CD4-positive, alpha-beta memory T cell (primary cell): ENCODE measurements at regions of chr12 and their contacts with region 1.

Region 1: GRCh38 chr12:93569656-93570551 is 2.6 kb upstream of the SOCS2 start:
- DNase-seq: peak; percentile 73 to 80 (median 74)
- H3K4me3 ChIP-seq: peak overlapping the region; percentile 71 to 78
- H3K4me3 Mint-ChIP-seq: peak overlapping the region; percentile 90 to 98 (median 92)
- H3K27ac ChIP-seq: peak overlapping the region; percentile 73
- H3K27ac Mint-ChIP-seq: peak overlapping the region; percentile 87 to 96 (median 92)
- H3K4me1 ChIP-seq: peaks cover 28% of the 10 kb centered on the region
- H3K4me1 Mint-ChIP-seq: peaks cover 16 to 41% (median 28%) of the 10 kb centered on the region in 4 donors
- H3K27me3 ChIP-seq: peaks cover 3% of the 10 kb centered on the region
- H3K27me3 Mint-ChIP-seq: peaks cover 1 to 2% of the 10 kb centered on the region in 2 donors

Region 2: DNA sequence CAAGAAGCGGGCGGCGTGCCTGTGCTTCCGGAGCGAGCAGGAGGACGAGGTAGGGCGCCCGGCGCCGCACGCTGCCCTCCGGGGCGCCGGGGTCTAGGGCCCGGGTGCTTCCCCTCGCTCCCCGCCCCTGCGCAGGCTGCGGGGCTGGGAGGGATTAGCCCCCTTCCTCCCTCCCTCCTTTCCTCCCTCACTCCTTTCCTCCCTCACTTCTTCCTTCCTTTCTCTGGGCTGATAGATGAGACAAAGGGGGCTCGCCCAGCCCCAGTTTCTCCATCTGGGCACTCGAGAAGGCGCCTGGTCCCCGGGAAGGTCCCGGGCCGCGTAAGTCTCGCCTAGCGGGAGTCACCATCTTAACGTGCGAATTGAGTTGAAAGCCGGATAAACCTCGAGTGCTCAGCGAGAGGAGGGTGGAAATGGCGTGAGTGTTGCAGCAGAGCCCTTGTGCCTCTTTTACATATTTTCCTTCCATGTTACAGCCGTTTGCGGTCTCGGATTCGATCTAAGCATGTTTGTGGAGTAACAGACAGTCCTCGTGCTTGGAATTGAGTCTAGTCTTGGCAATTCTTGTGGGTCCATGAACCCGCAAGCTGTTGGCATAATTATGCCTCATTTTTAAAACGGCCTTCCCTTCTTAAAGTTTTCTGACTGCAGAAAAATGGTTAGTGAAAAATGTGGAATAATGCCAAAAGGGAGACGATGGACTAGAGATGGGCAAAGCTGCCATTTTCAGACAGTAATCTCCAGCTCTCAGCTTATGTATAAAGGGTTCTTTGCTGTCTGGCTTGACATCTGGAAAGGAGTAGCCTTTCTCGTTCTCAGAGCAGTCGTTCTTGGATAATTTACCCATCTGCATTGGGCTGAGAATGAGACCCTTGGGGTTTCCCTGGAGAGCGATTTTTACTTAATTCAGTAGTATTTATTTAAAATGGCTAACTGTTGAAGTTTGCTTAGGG is 191.3 kb before region 1 on chr12:
- CTCF ChIA-PET with region 1: no interaction called
- POLR2A ChIA-PET with region 1: no interaction called
- intact Hi-C with region 1: loop called (anchors 1 kb)
- DNase-seq: peak; percentile 63 to 73 (median 69)
- H3K4me3 ChIP-seq: peak overlapping the region; percentile 71 to 88
- H3K4me3 Mint-ChIP-seq: peak overlapping the region; percentile 98 to 100 (median 99)
- H3K27ac ChIP-seq: peak overlapping the region; percentile 84
- H3K27ac Mint-ChIP-seq: peak overlapping the region; percentile 96 to 100 (median 99)
- H3K4me1 ChIP-seq: peaks cover 43% of the 10 kb centered on the region
- H3K4me1 Mint-ChIP-seq: peaks cover 28 to 57% (median 43%) of the 10 kb centered on the region in 4 donors
- H3K27me3 ChIP-seq: no peaks in the 10 kb centered on the region
- H3K27me3 Mint-ChIP-seq: no peaks in the 10 kb centered on the region

Region 3: DNA sequence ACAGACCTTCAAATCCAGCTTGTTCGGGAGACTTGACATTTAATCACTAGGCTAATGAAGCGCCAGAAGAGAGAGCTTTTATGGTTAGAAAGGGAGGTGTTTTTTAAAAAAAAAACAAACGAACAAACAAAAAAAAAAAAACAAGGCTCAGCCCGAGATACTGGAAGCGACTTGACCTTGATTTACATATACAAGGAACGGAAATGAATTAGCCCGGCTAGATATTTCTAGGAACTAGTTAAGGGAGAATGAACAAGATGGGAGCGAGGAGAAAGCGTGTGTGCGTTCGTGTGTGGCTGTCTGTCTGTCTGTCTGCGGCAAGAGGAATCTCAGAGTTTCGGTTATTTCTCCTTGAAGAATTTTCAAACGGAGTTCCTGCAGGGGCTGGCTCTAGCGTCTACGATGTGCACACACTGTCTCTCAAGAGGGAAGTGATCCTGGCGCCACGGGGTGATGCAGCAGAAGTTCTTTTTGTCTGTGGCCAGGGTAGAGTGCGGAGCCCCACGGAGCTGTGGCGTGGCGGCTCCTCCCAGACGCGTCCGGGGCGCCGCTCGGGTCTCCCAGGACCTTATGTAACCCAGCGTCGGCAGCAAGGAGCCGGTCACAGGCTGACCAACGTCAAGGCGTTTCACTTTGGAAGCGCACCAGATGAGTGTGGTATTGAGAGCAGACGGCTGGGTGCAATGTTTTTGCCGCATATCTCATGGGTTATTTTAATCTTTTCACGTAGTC is 21.4 kb after region 1 on chr12:
- CTCF ChIA-PET with region 1: interaction called, 3 read pairs
- POLR2A ChIA-PET with region 1: interaction called, 4 read pairs
- intact Hi-C with region 1: loop called (anchors 1 kb)
- DNase-seq: peak in 4 of 5 donors; percentile 22 to 34 (median 30)
- H3K4me3 ChIP-seq: peak overlapping the region; percentile 18 to 64
- H3K4me3 Mint-ChIP-seq: peak overlapping the region; percentile 85 to 96 (median 93)
- H3K27ac ChIP-seq: no peak overlapping the region
- H3K27ac Mint-ChIP-seq: peak overlapping the region in 6 of 7 donors; percentile 2 to 85 (median 61)
- H3K4me1 ChIP-seq: peaks cover 12% of the 10 kb centered on the region
- H3K4me1 Mint-ChIP-seq: peaks cover 10 to 25% (median 18%) of the 10 kb centered on the region in 4 donors
- H3K27me3 ChIP-seq: peaks cover 9% of the 10 kb centered on the region
- H3K27me3 Mint-ChIP-seq: peaks cover 17% of the 10 kb centered on the region in 2 donors

Region 4: DNA sequence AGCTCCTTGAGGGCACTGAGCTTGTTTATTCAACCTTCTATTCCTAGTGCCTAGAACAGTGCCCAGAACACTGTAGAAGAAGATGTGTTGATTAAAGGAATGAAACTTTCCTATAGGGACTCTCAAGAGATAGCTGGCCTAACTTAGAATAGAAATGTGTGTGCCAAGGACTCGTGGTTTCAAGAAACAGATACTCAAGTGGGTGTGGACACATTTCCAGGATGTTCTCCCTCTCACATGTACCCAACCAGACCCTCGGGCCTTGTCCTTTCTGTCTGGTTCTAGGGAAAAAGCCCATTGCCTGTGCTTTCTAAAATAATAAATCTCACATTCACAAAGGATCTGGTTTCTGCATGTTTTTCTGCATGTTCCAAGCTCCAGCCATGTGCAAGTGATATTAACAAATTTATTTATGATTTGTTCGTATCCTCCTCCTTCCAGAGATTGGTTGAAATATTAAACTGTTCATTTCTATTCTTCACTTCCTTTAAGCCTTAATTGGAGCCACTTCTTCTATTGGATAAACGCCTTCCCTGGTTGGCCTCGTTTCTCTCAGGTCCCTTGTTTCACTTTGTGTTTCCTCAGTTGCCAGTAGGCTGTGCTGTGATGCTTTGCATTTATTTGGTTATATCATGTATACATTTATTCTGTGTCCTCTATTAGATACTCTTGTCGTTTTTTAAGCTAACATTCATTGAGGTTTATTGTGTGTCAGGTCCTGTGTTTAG is 197.1 kb after region 1 on chr12:
- CTCF ChIA-PET with region 1: interaction called, 12 read pairs
- POLR2A ChIA-PET with region 1: no interaction called
- intact Hi-C with region 1: no loop called
- DNase-seq: peak; percentile 33 to 58 (median 37)
- H3K4me3 ChIP-seq: no peak overlapping the region
- H3K4me3 Mint-ChIP-seq: peak overlapping the region in 5 of 8 donors; percentile 1 to 60 (median 21)
- H3K27ac ChIP-seq: no peak overlapping the region
- H3K27ac Mint-ChIP-seq: peak overlapping the region; percentile 2 to 83 (median 12)
- H3K4me1 ChIP-seq: peaks cover 23% of the 10 kb centered on the region
- H3K4me1 Mint-ChIP-seq: peaks cover 18 to 32% (median 24%) of the 10 kb centered on the region in 4 donors
- H3K27me3 ChIP-seq: no peaks in the 10 kb centered on the region
- H3K27me3 Mint-ChIP-seq: no peaks in the 10 kb centered on the region

Region 5: GRCh38 chr12:94262228-94263010 is 692.5 kb after region 1 on chr12:
- CTCF ChIA-PET with region 1: no interaction called
- POLR2A ChIA-PET with region 1: interaction called, 4 read pairs
- intact Hi-C with region 1: loop called (anchors 1 kb)
- DNase-seq: peak; percentile 71 to 82 (median 76)
- H3K4me3 ChIP-seq: peak overlapping the region; percentile 40 to 84
- H3K4me3 Mint-ChIP-seq: peak overlapping the region; percentile 95 to 98 (median 97)
- H3K27ac ChIP-seq: peak overlapping the region; percentile 74
- H3K27ac Mint-ChIP-seq: peak overlapping the region; percentile 97 to 99 (median 99)
- H3K4me1 ChIP-seq: peaks cover 28% of the 10 kb centered on the region
- H3K4me1 Mint-ChIP-seq: peaks cover 19 to 56% (median 33%) of the 10 kb centered on the region in 4 donors
- H3K27me3 ChIP-seq: no peaks in the 10 kb centered on the region
- H3K27me3 Mint-ChIP-seq: no peaks in the 10 kb centered on the region